ENCODE measurements at regions of chr15 and their contacts with region 1.

Region 1: DNA sequence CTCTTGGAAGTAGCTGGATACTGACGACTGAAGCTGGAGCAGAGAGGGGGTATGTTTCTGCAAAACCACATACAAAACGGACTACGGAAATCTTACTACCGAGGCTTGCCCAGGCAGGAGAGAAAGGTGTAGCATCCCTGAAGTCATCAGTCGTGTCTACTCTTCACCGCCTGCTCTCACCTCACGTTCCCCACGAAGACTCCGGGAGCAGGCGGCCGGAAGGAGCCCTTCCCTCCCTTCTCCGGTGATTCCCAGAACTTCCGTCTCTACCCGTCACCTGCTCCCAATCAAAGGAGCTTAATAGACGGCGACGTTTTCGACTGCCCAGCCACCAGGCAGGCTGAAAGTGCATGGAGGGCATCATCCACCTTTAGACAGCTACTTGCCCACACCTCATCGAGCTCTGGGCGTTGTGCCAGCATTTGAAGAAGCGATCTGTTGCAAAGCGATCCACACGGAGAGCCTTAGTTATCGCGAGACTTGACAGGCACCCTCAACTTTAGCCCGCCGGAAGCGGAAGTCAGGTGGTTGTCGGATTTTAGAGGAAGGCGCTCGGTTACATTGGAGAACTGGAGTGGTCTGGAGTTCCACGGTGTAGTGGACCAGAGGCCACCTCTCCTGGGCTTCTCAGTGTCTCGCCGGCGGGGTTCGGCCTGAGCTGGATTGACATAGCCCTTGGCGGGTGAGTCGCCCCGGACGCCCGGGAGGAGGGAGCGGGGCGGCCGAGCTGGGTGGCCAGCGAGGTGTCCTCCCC is at the start of gene RAMAC:
- DNase-seq: peak; percentile 83 to 97
- H3K4me3 ChIP-seq: peak within 1 kb of the TSS; percentile 78 to 89
- H3K27ac ChIP-seq: peak within 1 kb of the TSS; percentile 63 to 72
- H3K4me1 ChIP-seq: peaks cover 0 to 14% of the 10 kb centered on the region in 2 donors
- H3K27me3 ChIP-seq: no peaks in the 10 kb centered on the region
- CTCF ChIP-seq: no peak
- total RNA-seq, gene RAMAC: 4.8 TPM

Region 2: GRCh38 chr15:82749951-82750830 is 235.7 kb before region 1 on chr15:
- intact Hi-C with region 1: loop called (anchors 10 kb)
- DNase-seq: peak; percentile 73 to 95
- H3K4me3 ChIP-seq: peak overlapping the region; percentile 73 to 90
- H3K27ac ChIP-seq: peak overlapping the region; percentile 85 to 89
- H3K4me1 ChIP-seq: peaks cover 5 to 7% of the 10 kb centered on the region in 2 donors
- H3K27me3 ChIP-seq: no peaks in the 10 kb centered on the region
- CTCF ChIP-seq: no peak

Region 3: GRCh38 chr15:83207622-83208411 is 222.0 kb after region 1 on chr15 and contains the start of gene HDGFL3:
- intact Hi-C with region 1: loop called (anchors 10 kb)
- DNase-seq: peak in 1 of 2 donors; percentile 73
- H3K4me3 ChIP-seq: peak within 1 kb of the TSS; percentile 79 to 100
- H3K27ac ChIP-seq: peak within 1 kb of the TSS; percentile 89 to 100
- H3K4me1 ChIP-seq: peaks cover 4% of the 10 kb centered on the region in 2 donors
- H3K27me3 ChIP-seq: no peaks in the 10 kb centered on the region
- CTCF ChIP-seq: no peak
- total RNA-seq, gene HDGFL3: 20.8 TPM